K562 (cell line): ENCODE measurements at regions of chr17 and their contacts with region 1.

Region 1: DNA sequence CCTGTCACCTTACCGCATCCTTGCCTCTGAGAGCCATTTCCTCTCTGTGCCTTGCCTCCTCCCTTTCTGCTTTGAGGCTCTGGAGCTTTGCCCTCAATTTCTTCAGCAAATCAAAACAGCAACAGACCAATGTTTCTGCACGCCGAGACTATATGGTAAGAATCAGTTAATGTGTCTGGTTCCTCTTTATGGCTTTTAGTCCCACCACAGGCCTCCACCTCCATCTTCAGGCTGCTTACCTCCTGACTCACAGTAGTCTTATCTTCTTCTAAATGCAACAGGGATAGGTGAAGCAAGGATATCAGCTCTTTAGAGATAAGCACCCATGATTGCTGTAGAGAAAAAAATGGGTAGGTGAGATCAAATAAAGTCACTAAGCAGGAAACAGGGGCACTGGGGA is 9.2 kb upstream of the ALDOC start:
- DNase-seq: no peak
- ATAC-seq: no peak
- H3K4me3 ChIP-seq: no peak overlapping the region
- H3K27ac ChIP-seq: no peak overlapping the region
- H3K4me1 ChIP-seq: no peaks in the 10 kb centered on the region
- H3K27me3 ChIP-seq: no peaks in the 10 kb centered on the region
- CTCF ChIP-seq: no peak
- EP300 ChIP-seq: no peak
- POLR2A ChIP-seq: no peak
- RAD21 ChIP-seq: no peak

Region 2: DNA sequence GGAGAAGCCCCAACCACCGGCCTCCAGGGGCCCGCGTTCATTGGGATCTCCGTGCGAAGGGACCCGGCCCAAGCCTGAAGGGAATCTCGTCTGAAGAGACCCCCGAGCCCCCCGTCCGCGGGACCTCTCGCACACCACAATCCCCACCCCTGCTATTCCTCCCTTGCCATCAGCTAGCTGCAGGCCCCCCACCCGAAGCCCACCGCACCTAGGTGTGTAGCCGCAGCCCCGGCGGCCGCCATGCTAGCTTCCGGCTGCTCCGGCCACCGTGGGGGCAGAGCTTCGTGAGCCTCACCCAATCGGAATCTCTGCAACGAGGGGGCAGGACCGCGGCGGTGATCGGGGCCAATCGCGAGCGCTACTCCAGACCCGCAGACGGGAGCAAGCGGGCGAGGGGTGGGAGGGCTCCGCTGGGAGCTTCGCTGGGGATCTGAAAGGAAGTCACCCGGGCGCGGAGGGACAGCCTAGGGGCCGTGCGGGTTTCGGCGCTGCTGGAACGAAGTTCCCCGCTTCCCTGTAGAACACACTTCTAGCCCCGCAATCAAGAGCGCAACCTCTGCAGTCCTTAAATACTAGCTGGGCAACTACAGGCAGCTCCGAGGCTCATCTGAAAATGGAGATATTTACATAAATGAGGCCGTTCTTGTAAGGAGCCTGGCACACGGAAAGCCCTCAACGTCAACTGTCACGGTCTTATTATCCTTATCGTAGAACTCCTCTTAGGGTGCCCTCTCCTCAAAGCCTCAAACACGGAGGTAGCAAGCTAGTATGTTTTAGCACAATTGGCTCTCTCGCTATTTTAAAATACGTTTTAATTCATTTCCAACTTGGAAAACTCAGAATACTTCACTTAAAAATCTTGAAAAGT is 14.4 kb before region 1 on chr17 and contains the start of gene PIGS:
- CTCF ChIA-PET with region 1: no interaction called
- POLR2A ChIA-PET with region 1: interaction called, 274 read pairs
- in situ Hi-C with region 1: no loop called
- intact Hi-C with region 1: no loop called
- DNase-seq: peak; percentile 95 to 98 (median 96)
- ATAC-seq: peak; percentile 96
- H3K4me3 ChIP-seq: peak within 1 kb of the TSS; percentile 82
- H3K27ac ChIP-seq: peak within 1 kb of the TSS; percentile 83
- H3K4me1 ChIP-seq: peaks cover 25 to 28% of the 10 kb centered on the region in 2 experiments; a peak in 4 of 5 replicates
- H3K27me3 ChIP-seq: no peaks in the 10 kb centered on the region
- CTCF ChIP-seq: no peak
- EP300 ChIP-seq: no peak
- POLR2A ChIP-seq: peak; percentile 91
- RAD21 ChIP-seq: no peak
- polyA plus RNA-seq, gene PIGS: 47.5 to 55.8 TPM